Heart left ventricle (tissue), 16 donors: ENCODE measurements at regions of chr4 and their contacts with region 1.

Region 1: DNA sequence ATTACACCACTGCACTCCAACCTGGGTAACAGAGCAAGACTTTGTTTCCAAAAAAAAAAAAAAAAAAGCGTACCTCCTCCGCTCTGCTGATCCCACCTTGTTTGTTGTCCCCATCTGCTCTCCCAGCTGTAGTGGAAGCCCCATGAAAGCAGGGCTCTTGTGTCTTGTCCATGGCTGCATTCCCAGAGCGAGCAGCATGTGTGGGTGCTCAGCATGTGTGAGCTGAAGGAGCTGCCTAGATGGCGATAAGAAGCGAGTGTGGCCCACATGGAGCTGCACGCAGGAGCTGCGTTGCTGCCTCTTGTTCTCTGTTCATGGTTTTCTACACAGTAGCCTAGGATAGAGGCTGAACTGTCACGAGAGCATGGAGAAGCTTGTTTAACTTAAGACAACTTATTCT is 12.4 kb downstream of the NSD2 start:
- DNase-seq: no peak
- ATAC-seq: peak in 2 of 4 donors; percentile 9 to 18
- H3K4me3 ChIP-seq: no peak overlapping the region
- H3K27ac ChIP-seq: peak overlapping the region in 3 of 12 donors; percentile 34 to 66 (median 47)
- H3K4me1 ChIP-seq: peaks cover 0 to 37% (median 7%) of the 10 kb centered on the region in 12 donors
- H3K27me3 ChIP-seq: no peaks in the 10 kb centered on the region
- CTCF ChIP-seq: no peak
- POLR2A ChIP-seq: no peak

Region 2: GRCh38 chr4:1842993-1843448 is 40.6 kb before region 1 on chr4:
- intact Hi-C with region 1: loop called in 1 of 10 experiments (anchors 5 kb)
- DNase-seq: peak in 2 of 5 donors; percentile 55 to 56
- ATAC-seq: peak; percentile 51 to 73 (median 58)
- H3K4me3 ChIP-seq: no peak overlapping the region
- H3K27ac ChIP-seq: peak overlapping the region in 10 of 12 donors; percentile 26 to 69 (median 50)
- H3K4me1 ChIP-seq: peaks cover 0 to 28% (median 16%) of the 10 kb centered on the region in 12 donors
- H3K27me3 ChIP-seq: no peaks in the 10 kb centered on the region
- CTCF ChIP-seq: no peak
- POLR2A ChIP-seq: no peak